ENCODE measurements at regions of chr7 and their contacts with region 1.

Region 1: GRCh38 chr7:50156706-50157105 is 63.7 kb upstream of the ZPBP start:
- DNase-seq: no peak
- ATAC-seq: peak; percentile 36
- H3K4me3 ChIP-seq: no peak overlapping the region
- H3K27ac ChIP-seq: no peak overlapping the region
- H3K4me1 ChIP-seq: peaks cover 14% of the 10 kb centered on the region
- H3K27me3 ChIP-seq: no peaks in the 10 kb centered on the region
- CTCF ChIP-seq: no peak
- EP300 ChIP-seq: no peak
- POLR2A ChIP-seq: no peak
- RAD21 ChIP-seq: no peak

Region 2: GRCh38 chr7:50142425-50143017 is 14.2 kb before region 1 on chr7:
- CTCF ChIA-PET with region 1: interaction called, 19 read pairs
- POLR2A ChIA-PET with region 1: interaction called, 6 read pairs
- RAD21 ChIA-PET with region 1: interaction called, 16 read pairs
- SMC1A ChIA-PET with region 1: interaction called, 24 read pairs
- in situ Hi-C with region 1: no loop called
- intact Hi-C with region 1: no loop called
- DNase-seq: peak; percentile 24
- ATAC-seq: peak; percentile 51
- H3K4me3 ChIP-seq: no peak overlapping the region
- H3K27ac ChIP-seq: no peak overlapping the region
- H3K4me1 ChIP-seq: peaks cover 24% of the 10 kb centered on the region
- H3K27me3 ChIP-seq: no peaks in the 10 kb centered on the region; a peak in 1 of 4 replicates
- CTCF ChIP-seq: peak; percentile 55 to 61 (median 60)
- EP300 ChIP-seq: no peak
- POLR2A ChIP-seq: no peak
- RAD21 ChIP-seq: peak; percentile 85

Region 3: GRCh38 chr7:50739744-50740435 is 583.2 kb after region 1 on chr7:
- CTCF ChIA-PET with region 1: no interaction called
- POLR2A ChIA-PET with region 1: no interaction called
- RAD21 ChIA-PET with region 1: no interaction called
- SMC1A ChIA-PET with region 1: no interaction called
- in situ Hi-C with region 1: no loop called
- intact Hi-C with region 1: no loop called
- DNase-seq: no peak
- ATAC-seq: peak; percentile 44
- H3K4me3 ChIP-seq: no peak overlapping the region
- H3K27ac ChIP-seq: no peak overlapping the region
- H3K4me1 ChIP-seq: no peaks in the 10 kb centered on the region
- H3K27me3 ChIP-seq: no peaks in the 10 kb centered on the region
- CTCF ChIP-seq: no peak
- EP300 ChIP-seq: no peak
- POLR2A ChIP-seq: no peak
- RAD21 ChIP-seq: no peak

Measured in GM12878 (cell line).